ENCODE measurements at regions of chr10 and their contacts with region 1.

Region 1: DNA sequence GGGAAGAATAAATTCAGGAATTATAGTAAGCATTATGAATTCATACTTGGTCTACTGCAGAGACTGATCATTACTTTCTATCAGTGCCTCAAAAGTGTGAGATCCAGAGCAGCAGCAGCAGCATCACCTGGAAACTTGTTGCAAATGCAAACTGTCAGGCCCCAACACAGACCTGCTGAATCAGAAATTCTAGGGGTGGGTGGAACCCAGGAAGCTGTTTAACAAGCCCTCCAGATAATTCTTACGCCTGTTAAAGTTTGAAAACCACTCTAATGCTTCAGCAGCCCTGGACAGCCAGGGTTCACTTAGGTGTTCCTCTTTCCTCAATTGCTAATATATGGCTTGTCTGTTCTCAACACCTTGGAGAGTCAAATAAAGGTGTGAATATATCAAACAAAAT is 19.5 kb downstream of the CACUL1 start:
- DNase-seq: no peak
- ATAC-seq: no peak
- H3K4me3 ChIP-seq: no peak overlapping the region
- H3K4me3 Mint-ChIP-seq: no peak overlapping the region
- H3K27ac ChIP-seq: no peak overlapping the region
- H3K27ac Mint-ChIP-seq: peak overlapping the region in 1 of 2 donors; percentile 86
- H3K4me1 ChIP-seq: peaks cover 27 to 48% of the 10 kb centered on the region in 2 experiments
- H3K4me1 Mint-ChIP-seq: peaks cover 92 to 94% (median 93%) of the 10 kb centered on the region in 3 donors
- H3K27me3 ChIP-seq: no peaks in the 10 kb centered on the region
- H3K27me3 Mint-ChIP-seq: no peaks in the 10 kb centered on the region

Region 2: GRCh38 chr10:118605694-118606093 is 129.6 kb before region 1 on chr10:
- CTCF ChIA-PET with region 1: interaction called in 1 of 2 experiments, 10 read pairs
- POLR2A ChIA-PET with region 1: no interaction called
- DNase-seq: no peak
- ATAC-seq: no peak
- H3K4me3 ChIP-seq: no peak overlapping the region
- H3K4me3 Mint-ChIP-seq: no peak overlapping the region
- H3K27ac ChIP-seq: no peak overlapping the region
- H3K27ac Mint-ChIP-seq: no peak overlapping the region
- H3K4me1 ChIP-seq: no peaks in the 10 kb centered on the region
- H3K4me1 Mint-ChIP-seq: no peaks in the 10 kb centered on the region
- H3K27me3 ChIP-seq: peaks cover 0 to 5% of the 10 kb centered on the region in 2 experiments
- H3K27me3 Mint-ChIP-seq: peaks cover under 1% of the 10 kb centered on the region in 2 donors

Region 3: GRCh38 chr10:118754720-118755480 is 19.6 kb after region 1 on chr10 and contains the start of gene CACUL1:
- CTCF ChIA-PET with region 1: interaction called, 3 to 18 read pairs
- POLR2A ChIA-PET with region 1: interaction called in 1 of 2 experiments, 3 read pairs
- DNase-seq: peak; percentile 99 to 100 (median 100)
- ATAC-seq: peak; percentile 98 to 99 (median 98)
- H3K4me3 ChIP-seq: peak within 1 kb of the TSS; percentile 88 to 93
- H3K4me3 Mint-ChIP-seq: peak within 1 kb of the TSS; percentile 89 to 92 (median 92)
- H3K27ac ChIP-seq: peak within 1 kb of the TSS; percentile 64
- H3K27ac Mint-ChIP-seq: peak within 1 kb of the TSS; percentile 84 to 88
- H3K4me1 ChIP-seq: peaks cover 17 to 23% of the 10 kb centered on the region in 2 experiments
- H3K4me1 Mint-ChIP-seq: peaks cover 37 to 48% (median 38%) of the 10 kb centered on the region in 3 donors
- H3K27me3 ChIP-seq: peaks cover 0 to 5% of the 10 kb centered on the region in 2 experiments
- H3K27me3 Mint-ChIP-seq: peaks cover 0 to 3% of the 10 kb centered on the region in 2 donors
- total RNA-seq, gene CACUL1: 26.3 to 35.2 (median 27.9) TPM

Region 4: DNA sequence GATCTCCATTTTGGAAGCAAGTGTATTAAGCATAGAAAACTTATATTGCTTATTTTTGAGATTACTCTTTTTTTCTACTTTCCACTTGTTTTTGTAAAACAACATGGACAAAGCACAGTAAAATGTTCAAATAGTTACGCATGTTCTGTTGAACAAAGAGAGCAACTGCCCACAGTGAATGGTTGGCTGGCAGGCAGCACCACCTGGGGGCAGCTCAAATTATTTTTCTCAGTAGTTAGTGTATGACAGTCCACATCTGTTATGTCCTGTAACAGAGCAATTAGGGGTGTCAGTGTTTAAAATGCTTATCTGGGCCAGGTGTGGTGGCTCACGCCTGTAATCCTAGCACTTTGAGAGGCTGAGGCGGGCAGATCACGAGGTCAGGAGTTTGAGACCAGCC is 65.6 kb after region 1 on chr10:
- CTCF ChIA-PET with region 1: no interaction called
- POLR2A ChIA-PET with region 1: no interaction called
- DNase-seq: peak in 12 of 35 experiments; percentile 3 to 24 (median 10)
- ATAC-seq: no peak
- H3K4me3 ChIP-seq: no peak overlapping the region
- H3K4me3 Mint-ChIP-seq: no peak overlapping the region
- H3K27ac ChIP-seq: no peak overlapping the region
- H3K27ac Mint-ChIP-seq: no peak overlapping the region
- H3K4me1 ChIP-seq: no peaks in the 10 kb centered on the region
- H3K4me1 Mint-ChIP-seq: no peaks in the 10 kb centered on the region
- H3K27me3 ChIP-seq: peaks cover 0 to 16% of the 10 kb centered on the region in 2 experiments
- H3K27me3 Mint-ChIP-seq: peaks cover 11 to 16% of the 10 kb centered on the region in 2 donors

Measured in T-cell (primary cell).